ENCODE measurements at regions of chr17 and their contacts with region 1.

Region 1: DNA sequence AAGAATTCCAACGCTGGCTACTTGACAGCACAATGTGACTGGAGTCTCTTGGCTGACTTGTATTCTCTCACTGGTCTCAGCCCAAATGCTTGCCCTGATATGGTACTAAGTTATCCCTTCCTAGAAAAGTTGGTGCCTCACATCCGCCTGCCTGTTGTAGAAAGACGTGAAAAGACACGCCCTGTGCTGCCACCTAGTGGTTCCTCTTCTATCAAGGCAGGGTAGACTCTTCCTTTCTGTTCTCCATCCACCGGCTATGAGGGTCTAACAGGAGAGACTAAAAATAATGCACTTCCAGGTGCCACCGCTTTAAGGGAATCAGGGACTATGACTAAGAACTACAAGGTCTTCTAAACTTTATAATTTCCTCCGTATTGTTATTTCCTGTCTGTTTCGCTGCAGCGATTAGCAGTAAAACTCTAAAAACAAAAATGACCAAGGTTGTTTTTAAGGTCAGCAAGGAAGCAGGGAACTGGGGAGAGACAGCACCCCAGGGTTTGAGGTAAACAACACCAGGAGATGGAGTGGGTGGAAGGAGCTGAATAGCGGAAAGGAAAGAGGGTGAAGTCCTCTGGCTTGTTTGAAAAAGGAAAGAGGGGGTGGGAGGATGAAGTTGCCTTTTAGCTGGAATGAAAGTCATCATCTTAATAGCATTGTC is 109.5 kb downstream of the YPEL2 start:
- DNase-seq: peak; percentile 74 to 96
- ATAC-seq: peak; percentile 88 to 96 (median 94)
- H3K4me3 ChIP-seq: peak overlapping the region in 5 of 10 donors; percentile 13 to 25 (median 16)
- H3K27ac ChIP-seq: peak overlapping the region in 9 of 10 donors; percentile 49 to 84 (median 81)
- H3K4me1 ChIP-seq: peaks cover 5 to 61% (median 35%) of the 10 kb centered on the region in 9 donors
- H3K27me3 ChIP-seq: no peaks in the 10 kb centered on the region
- CTCF ChIP-seq: peak; percentile 78 to 96 (median 89)

Region 2: GRCh38 chr17:58587702-58588254 is 853.1 kb before region 1 on chr17:
- intact Hi-C with region 1: no loop called
- DNase-seq: peak; percentile 39 to 40
- ATAC-seq: peak in 6 of 8 donors; percentile 41 to 79 (median 62)
- H3K4me3 ChIP-seq: no peak overlapping the region
- H3K27ac ChIP-seq: no peak overlapping the region
- H3K4me1 ChIP-seq: no peaks in the 10 kb centered on the region
- H3K27me3 ChIP-seq: no peaks in the 10 kb centered on the region
- CTCF ChIP-seq: peak; percentile 85 to 96 (median 94)

Region 3: GRCh38 chr17:59400858-59401257 is 40.1 kb before region 1 on chr17:
- intact Hi-C with region 1: loop called in 1 of 10 experiments (anchors 5 kb)
- DNase-seq: no peak
- ATAC-seq: no peak
- H3K4me3 ChIP-seq: no peak overlapping the region
- H3K27ac ChIP-seq: peak overlapping the region in 8 of 10 donors; percentile 22 to 66 (median 50)
- H3K4me1 ChIP-seq: peaks cover 0 to 51% (median 27%) of the 10 kb centered on the region in 9 donors
- H3K27me3 ChIP-seq: no peaks in the 10 kb centered on the region
- CTCF ChIP-seq: no peak

Measured in heart right ventricle (tissue), 16 donors.